Heart left ventricle (tissue), 16 donors: ENCODE measurements at regions of chr4 and their contacts with region 1.

Region 1: DNA sequence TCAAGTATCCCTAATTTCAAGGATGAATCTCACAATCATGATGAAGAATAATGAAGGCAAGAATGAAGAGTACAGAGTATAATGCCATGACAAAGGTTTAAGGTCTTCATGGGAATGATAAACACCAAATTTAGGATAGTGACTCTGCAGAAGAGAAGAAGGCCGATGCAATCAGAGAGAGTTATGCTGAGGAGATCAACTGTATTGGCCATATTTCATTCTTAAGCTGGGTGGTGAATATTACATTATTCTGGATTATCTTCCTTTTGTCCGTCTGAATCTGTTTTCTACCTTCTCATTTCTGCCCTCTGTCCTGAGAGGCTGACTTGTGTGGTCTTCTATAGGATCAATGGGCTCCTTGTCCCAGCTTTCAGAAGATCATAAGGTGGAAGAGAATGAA is 7.8 kb upstream of the METAP1 start:
- DNase-seq: no peak
- ATAC-seq: no peak
- H3K4me3 ChIP-seq: no peak overlapping the region
- H3K27ac ChIP-seq: no peak overlapping the region
- H3K4me1 ChIP-seq: no peaks in the 10 kb centered on the region
- H3K27me3 ChIP-seq: no peaks in the 10 kb centered on the region
- CTCF ChIP-seq: no peak
- POLR2A ChIP-seq: no peak

Region 2: DNA sequence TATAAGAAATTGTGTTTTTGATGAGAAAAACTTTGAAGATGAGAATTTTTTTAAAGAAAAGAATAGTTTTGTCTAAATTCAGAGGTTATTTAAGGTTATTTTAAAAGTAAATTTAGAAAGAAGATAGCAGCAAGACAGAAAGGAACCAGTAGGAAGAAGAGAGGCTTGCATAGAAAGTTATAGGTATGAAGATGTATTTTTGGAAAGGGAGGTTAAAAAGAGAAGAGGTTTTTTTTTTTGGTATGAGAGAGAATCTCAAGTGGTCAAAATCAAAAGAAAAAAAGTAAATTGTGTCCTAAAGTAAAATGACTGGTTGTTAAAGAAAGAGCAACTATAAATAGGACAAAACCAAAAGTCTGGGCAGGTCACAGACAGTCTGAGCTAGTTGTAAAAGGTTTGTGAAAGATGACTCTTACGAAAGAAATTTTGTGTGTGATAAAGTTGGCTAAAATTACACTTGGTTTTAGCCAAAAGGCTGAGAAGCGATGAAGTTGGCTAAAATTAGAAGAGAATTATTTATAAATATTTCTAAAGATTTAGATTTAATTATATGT is 42.3 kb before region 1 on chr4:
- intact Hi-C with region 1: loop called in 2 of 10 experiments (anchors 5 kb)
- DNase-seq: no peak
- ATAC-seq: no peak
- H3K4me3 ChIP-seq: no peak overlapping the region
- H3K27ac ChIP-seq: no peak overlapping the region
- H3K4me1 ChIP-seq: no peaks in the 10 kb centered on the region
- H3K27me3 ChIP-seq: no peaks in the 10 kb centered on the region
- CTCF ChIP-seq: no peak
- POLR2A ChIP-seq: no peak